Right ventricle myocardium inferior (tissue), 1 donor: ENCODE measurements at regions of chr3 and their contacts with region 1.

Region 1: GRCh38 chr3:146577662-146578061 is 27.5 kb downstream of the PLSCR5 start:
- DNase-seq: no peak
- ATAC-seq: no peak

Region 2: GRCh38 chr3:146065573-146066006 is 512.1 kb before region 1 on chr3:
- intact Hi-C with region 1: loop called (anchors 10 kb)
- DNase-seq: no peak
- ATAC-seq: no peak

Region 3: DNA sequence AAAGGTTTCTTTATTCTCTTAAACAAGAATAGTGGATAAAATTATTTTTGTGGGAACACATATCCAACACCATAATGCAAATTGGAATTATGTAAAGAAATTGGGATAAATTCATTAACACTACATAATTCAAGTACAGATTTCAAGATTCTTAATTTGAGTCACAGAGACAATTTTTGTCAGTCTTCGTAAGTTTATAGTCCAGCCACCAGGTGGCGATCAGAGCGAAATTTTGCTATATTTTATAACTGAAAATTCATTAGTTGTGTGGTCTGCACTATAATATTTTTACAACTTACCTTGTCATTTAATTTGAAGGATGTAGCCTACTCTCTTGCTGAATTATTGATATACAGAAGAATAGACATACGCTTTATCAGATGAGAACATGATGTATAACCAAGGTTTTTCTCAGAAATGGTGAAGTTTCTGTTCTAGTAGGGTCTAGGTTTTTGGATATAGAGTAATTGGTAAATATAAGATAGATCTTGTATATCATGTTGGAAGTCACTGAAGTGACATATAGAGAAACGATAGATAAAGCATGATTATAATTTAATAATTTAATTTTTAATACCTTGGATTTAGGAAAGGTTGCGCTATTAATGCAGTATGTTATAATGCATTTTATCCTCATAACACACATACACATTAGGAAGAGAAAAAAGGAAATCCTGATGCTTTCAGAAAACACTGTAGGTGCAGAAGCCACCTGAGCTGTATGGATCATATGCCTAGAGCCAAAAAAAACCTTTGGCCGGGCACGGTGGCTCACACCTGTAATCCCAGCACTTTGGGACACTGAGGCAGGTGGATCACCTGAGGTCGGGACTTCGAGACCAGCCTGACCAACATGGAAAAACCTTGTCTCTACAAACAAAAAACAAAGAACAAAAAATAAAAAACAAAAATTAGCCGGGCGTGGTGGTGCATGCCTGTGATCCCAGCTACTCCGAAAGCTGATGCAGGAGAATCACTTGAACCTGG is 358.5 kb before region 1 on chr3:
- intact Hi-C with region 1: loop called (anchors 5 kb)
- DNase-seq: no peak
- ATAC-seq: no peak

Region 4: GRCh38 chr3:146337991-146338390 is 239.7 kb before region 1 on chr3:
- intact Hi-C with region 1: loop called (anchors 2 kb)
- DNase-seq: no peak
- ATAC-seq: no peak

Region 5: DNA sequence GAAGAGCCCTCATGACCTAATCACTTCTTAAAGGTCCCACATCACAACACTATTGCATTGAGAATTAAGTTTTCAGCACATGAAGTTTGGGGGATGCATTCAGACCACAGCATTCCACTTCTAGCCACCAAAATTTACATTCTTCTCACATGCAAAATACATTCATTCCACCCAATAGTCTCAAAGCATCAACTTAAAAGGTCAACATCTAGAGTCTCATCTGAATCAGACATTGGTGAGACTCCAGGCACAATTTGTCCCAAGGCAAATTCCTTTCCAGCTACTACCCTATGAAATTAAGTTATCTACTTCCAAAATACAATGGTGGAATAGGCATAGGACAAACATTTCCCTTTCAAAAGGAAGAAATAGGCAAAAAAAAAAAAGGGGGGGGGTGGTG is 173.2 kb before region 1 on chr3:
- intact Hi-C with region 1: no loop called
- DNase-seq: no peak
- ATAC-seq: no peak